Right ventricle myocardium superior (tissue), 1 donor: ENCODE measurements at regions of chr16 and their contacts with region 1.

Region 1: GRCh38 chr16:86016201-86016871 is 117.4 kb downstream of the IRF8 start:
- DNase-seq: no peak
- ATAC-seq: peak; percentile 74

Region 2: DNA sequence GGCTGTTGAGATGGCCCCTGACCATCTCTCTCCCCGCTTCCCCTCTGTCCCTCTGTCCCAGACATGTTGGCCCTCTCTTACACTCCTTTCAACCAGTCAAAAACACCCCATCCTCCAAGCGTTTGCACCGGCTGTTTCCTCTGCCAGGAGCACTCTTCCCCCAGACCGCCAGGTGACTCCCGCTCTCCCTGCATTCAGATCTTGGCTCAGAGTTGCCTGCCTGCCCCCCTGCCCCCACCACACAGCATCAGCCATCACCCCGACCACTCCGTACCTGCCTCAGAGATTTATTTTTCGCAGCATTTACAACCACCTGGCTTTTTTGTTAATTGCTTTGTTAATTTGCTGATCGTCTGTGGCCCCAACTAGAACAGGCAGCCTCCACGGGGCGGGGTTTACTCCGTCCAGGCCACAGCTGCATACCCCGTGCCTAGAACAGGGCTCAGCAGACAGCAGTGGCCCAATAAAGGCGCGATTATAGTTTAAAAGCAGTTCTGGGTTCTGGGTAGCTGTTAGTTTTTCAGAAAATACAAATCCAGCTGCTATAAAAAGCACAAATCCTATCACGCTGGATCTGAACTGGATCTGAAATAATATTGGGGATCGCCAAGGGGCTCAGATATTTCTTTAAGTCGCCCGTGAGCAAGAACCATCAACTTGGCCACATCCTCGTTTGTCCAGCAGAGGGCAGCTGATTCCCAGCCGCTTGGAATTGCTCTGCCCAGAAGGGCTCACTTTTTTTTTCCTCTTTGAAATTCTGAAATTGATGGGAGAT is 56.2 kb after region 1 on chr16:
- intact Hi-C with region 1: loop called (anchors 10 kb)
- DNase-seq: peak; percentile 67
- ATAC-seq: peak; percentile 76

Region 3: GRCh38 chr16:86334079-86334635 is 317.8 kb after region 1 on chr16:
- intact Hi-C with region 1: no loop called
- DNase-seq: no peak
- ATAC-seq: no peak